ENCODE measurements at regions of chr1 and their contacts with region 1.

Region 1: GRCh38 chr1:206982216-206982615 is 12.0 kb upstream of the FCAMR start:
- DNase-seq: peak; percentile 76
- H3K4me3 Mint-ChIP-seq: no peak overlapping the region
- H3K27ac Mint-ChIP-seq: no peak overlapping the region
- H3K4me1 Mint-ChIP-seq: peaks cover 59% of the 10 kb centered on the region
- H3K27me3 Mint-ChIP-seq: no peaks in the 10 kb centered on the region
- CTCF ChIP-seq: peak; percentile 61

Region 2: GRCh38 chr1:206635080-206635977 is 346.9 kb before region 1 on chr1 and contains the start of gene DYRK3:
- CTCF ChIA-PET with region 1: interaction called, 10 read pairs
- intact Hi-C with region 1: loop called (anchors 1 kb)
- DNase-seq: peak; percentile 98
- H3K4me3 Mint-ChIP-seq: peak within 1 kb of the TSS; percentile 95
- H3K27ac Mint-ChIP-seq: peak within 1 kb of the TSS; percentile 75
- H3K4me1 Mint-ChIP-seq: peaks cover 26% of the 10 kb centered on the region
- H3K27me3 Mint-ChIP-seq: peaks cover 26% of the 10 kb centered on the region
- CTCF ChIP-seq: no peak
- total RNA-seq, gene DYRK3: 7.6 and 8.0 TPM in 2 replicates

Region 3: DNA sequence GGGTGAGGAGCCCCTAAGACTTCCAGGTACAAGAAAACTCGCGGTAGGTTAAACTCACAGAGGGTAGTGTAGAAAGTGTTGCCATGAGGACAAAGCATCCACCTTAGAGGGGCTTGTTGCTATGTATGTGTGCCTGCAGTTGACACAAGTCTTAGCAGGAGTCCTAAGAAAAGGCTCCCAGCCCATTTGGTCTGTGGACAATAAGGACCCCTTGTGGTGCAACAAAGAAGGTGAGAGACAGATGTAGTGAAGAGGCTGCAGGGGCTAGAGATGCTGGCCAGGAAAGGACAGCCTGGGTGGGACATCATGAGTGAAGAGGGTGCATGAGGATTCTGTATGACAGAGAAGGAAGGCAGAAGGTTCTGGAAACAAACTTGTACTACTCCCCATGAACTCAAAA is 173.6 kb before region 1 on chr1:
- CTCF ChIA-PET with region 1: interaction called, 43 read pairs
- intact Hi-C with region 1: loop called (anchors 1 kb)
- DNase-seq: peak; percentile 21
- H3K4me3 Mint-ChIP-seq: no peak overlapping the region
- H3K27ac Mint-ChIP-seq: no peak overlapping the region
- H3K4me1 Mint-ChIP-seq: no peaks in the 10 kb centered on the region
- H3K27me3 Mint-ChIP-seq: peaks cover 97% of the 10 kb centered on the region
- CTCF ChIP-seq: no peak

Region 4: GRCh38 chr1:206912445-206913095 is 69.6 kb before region 1 on chr1:
- CTCF ChIA-PET with region 1: interaction called, 49 read pairs
- intact Hi-C with region 1: loop called (anchors 1 kb)
- DNase-seq: peak; percentile 82
- H3K4me3 Mint-ChIP-seq: no peak overlapping the region
- H3K27ac Mint-ChIP-seq: no peak overlapping the region
- H3K4me1 Mint-ChIP-seq: peaks cover 25% of the 10 kb centered on the region
- H3K27me3 Mint-ChIP-seq: peaks cover 20% of the 10 kb centered on the region
- CTCF ChIP-seq: peak; percentile 84

Region 5: GRCh38 chr1:206941858-206942387 is 40.3 kb before region 1 on chr1:
- CTCF ChIA-PET with region 1: interaction called, 12 read pairs
- intact Hi-C with region 1: no loop called
- DNase-seq: peak; percentile 81
- H3K4me3 Mint-ChIP-seq: peak overlapping the region; percentile 18
- H3K27ac Mint-ChIP-seq: peak overlapping the region; percentile 86
- H3K4me1 Mint-ChIP-seq: peaks cover 64% of the 10 kb centered on the region
- H3K27me3 Mint-ChIP-seq: no peaks in the 10 kb centered on the region
- CTCF ChIP-seq: no peak

Region 6: DNA sequence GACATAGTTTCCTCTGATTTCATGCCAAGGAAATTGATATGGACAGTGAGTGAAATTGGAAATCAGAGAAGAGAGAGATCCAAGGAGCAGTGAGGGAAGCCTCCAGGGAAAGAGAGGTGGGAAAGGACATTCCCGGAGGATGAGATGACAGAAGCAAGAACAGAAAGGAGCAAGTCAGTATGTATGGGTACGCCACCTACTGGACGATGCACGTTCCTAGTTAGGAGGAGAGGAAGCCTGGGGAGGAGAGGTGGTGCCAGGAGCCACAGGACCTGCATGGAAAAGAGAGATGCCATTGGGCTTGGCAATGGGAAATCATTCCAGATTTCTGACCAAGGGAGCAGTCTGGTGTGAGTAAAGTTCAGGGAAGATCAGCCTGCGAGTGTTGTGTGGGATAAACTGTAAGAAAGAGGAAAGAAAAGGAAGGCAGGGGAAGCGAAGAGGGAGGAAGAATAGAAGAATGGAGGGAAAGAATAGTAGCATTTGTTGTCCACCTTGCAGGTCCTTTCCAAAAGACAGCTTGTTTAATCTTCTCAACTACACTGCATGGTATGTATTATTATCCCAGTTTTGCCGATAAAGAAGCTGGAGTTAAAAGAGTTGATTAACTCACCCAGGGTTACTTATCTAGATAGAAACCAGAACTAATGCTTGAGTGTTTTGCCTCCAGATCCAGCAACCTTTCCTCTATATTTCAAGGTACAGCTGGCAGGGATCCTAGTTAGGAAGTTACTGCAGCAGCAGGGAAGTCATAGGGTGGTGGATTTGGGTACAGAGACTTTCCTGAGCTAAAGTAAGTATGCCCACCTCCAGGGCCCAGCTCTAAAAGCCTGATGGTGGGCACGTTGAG is 23.0 kb after region 1 on chr1:
- CTCF ChIA-PET with region 1: interaction called, 11 read pairs
- intact Hi-C with region 1: no loop called
- DNase-seq: peak; percentile 85
- H3K4me3 Mint-ChIP-seq: peak overlapping the region; percentile 26
- H3K27ac Mint-ChIP-seq: peak overlapping the region; percentile 88
- H3K4me1 Mint-ChIP-seq: peaks cover 97% of the 10 kb centered on the region
- H3K27me3 Mint-ChIP-seq: no peaks in the 10 kb centered on the region
- CTCF ChIP-seq: peak; percentile 89

Region 7: DNA sequence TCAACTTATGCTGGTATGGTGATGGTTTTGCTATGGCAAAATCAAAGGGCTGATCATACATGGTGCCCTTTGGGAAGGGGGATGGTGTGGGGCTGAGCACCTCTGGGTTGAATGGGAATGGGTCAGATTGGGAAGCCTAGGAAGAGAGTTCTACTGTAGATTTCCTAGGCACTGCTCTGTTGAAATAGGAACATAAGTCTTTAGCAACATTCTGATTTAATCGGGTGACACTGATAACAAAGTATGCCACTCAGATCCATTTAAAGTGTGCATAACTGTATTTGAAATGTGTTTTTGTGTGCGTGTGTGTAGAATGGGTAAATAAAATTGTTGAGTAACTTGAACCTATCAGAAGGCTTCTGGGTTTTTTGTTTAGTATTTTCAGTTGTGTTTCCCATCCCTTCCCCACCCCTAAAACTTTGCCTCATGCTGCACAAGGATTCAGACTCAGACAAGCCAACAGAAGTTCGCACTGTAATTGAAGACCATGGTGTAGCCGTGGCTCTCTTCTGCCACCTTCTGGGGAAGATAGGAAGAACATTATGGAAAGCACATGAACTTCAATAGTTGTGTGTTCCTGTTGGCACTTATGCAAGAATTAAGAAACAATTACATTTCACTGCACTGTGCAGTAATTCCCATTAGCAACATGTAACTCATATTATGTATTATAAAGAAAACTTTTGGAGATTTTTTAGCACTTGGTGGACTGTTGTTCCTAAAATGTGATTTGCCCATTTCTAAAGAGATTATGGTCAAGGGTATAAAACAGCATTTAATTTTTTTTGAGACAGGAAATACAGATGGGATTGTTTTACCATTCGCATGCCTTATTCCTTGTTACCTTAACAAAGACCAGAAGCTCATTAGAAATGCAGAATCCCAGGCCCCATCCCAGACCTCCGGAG is 95.5 kb after region 1 on chr1:
- CTCF ChIA-PET with region 1: interaction called, 3 read pairs
- intact Hi-C with region 1: loop called (anchors 1 kb)
- DNase-seq: peak; percentile 83
- H3K4me3 Mint-ChIP-seq: no peak overlapping the region
- H3K27ac Mint-ChIP-seq: no peak overlapping the region
- H3K4me1 Mint-ChIP-seq: peaks cover 9% of the 10 kb centered on the region
- H3K27me3 Mint-ChIP-seq: no peaks in the 10 kb centered on the region
- CTCF ChIP-seq: peak; percentile 73

Region 8: DNA sequence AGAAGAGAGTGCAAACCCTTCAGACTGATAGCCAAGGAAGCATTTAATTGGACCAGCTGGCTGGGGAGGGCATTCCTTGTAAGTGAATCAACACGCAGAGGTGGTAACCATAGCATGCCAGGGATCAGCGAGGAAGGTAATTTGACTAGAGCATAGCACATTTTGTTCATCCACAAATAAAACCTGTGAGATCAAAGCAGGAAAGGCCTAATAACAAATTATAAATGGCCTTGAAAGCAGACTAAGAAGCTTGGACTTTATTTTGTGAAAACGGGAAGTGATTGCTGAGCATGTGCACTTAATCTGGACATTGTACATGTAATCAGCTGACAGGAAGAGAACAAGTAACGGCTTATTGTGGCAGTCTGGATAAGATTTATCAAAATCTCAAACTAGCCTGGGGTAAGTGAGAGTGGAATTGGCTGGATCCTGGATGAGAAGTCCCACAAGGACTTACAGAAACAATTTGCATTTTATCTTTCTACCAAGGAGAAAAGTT is 327.6 kb after region 1 on chr1:
- CTCF ChIA-PET with region 1: no interaction called
- intact Hi-C with region 1: no loop called
- DNase-seq: peak; percentile 76
- H3K4me3 Mint-ChIP-seq: peak overlapping the region; percentile 23
- H3K27ac Mint-ChIP-seq: peak overlapping the region; percentile 78
- H3K4me1 Mint-ChIP-seq: peaks cover 40% of the 10 kb centered on the region
- H3K27me3 Mint-ChIP-seq: no peaks in the 10 kb centered on the region
- CTCF ChIP-seq: no peak